Adrenal gland (tissue), 19 donors: ENCODE measurements at regions of chr3 and their contacts with region 1.

Region 1: GRCh38 chr3:133568294-133569014 is 5.0 kb upstream of the CDV3 start:
- DNase-seq: peak in 3 of 7 donors; percentile 33 to 36 (median 33)
- H3K4me3 ChIP-seq: no peak overlapping the region
- H3K27ac ChIP-seq: peak overlapping the region in 1 of 5 donors; percentile 44
- H3K4me1 ChIP-seq: peaks cover 5 to 18% of the 10 kb centered on the region in 2 donors
- H3K27me3 ChIP-seq: no peaks in the 10 kb centered on the region
- CTCF ChIP-seq: no peak
- POLR2A ChIP-seq: no peak

Region 2: GRCh38 chr3:133475245-133476010 is 93.0 kb before region 1 on chr3:
- intact Hi-C with region 1: loop called in 1 of 2 experiments (anchors 10 kb)
- DNase-seq: no peak
- H3K4me3 ChIP-seq: no peak overlapping the region
- H3K27ac ChIP-seq: peak overlapping the region in 1 of 5 donors; percentile 14
- H3K4me1 ChIP-seq: peaks cover 0 to 6% of the 10 kb centered on the region in 2 donors
- H3K27me3 ChIP-seq: no peaks in the 10 kb centered on the region
- CTCF ChIP-seq: no peak
- POLR2A ChIP-seq: no peak

Region 3: DNA sequence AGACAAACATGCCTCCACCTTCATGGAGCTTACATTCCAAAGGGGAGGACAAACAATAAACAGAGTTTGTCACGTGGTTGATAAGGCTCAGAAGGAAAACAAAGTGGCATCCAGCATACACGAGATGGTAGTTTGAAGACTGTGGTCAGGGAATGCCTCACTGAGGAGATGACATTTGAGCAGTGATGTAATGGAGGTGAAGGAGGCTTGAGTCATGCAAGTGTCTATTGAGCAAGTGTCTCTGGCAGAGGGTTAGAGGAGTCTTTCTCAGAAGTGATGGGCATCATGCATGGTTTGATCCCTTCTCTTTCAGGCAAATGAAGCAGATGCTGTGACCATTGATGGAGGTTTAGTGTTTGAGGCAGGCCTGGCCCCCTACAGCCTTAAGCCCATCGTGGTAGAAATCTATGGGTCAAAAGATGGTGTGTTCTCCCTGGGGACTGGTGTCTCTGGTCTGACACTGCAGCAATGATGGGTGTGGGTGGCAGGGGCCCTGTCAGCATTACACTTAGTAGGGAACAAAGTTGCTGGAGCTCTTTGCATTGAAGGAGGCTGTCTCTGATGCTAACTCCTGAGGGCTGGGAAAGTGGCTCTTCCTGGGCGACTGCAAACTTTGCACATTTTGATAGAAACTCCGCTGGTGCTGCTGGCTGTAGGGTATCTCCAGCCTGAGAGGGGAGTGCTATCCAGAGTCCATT is 123.1 kb after region 1 on chr3:
- intact Hi-C with region 1: no loop called
- DNase-seq: no peak
- H3K4me3 ChIP-seq: no peak overlapping the region
- H3K27ac ChIP-seq: no peak overlapping the region
- H3K4me1 ChIP-seq: no peaks in the 10 kb centered on the region
- H3K27me3 ChIP-seq: no peaks in the 10 kb centered on the region
- CTCF ChIP-seq: no peak
- POLR2A ChIP-seq: no peak

Region 4: GRCh38 chr3:133745981-133746711 is 177.7 kb after region 1 on chr3 and contains the start of gene TF:
- intact Hi-C with region 1: no loop called
- DNase-seq: no peak
- H3K4me3 ChIP-seq: no peak within 1 kb of the TSS
- H3K27ac ChIP-seq: no peak within 1 kb of the TSS
- H3K4me1 ChIP-seq: no peaks in the 10 kb centered on the region
- H3K27me3 ChIP-seq: no peaks in the 10 kb centered on the region
- CTCF ChIP-seq: no peak
- POLR2A ChIP-seq: no peak
- total RNA-seq, gene TF: under 0.01 to 15.5 (median 2.1) TPM in 8 of 9 donors, not detected in the other